Activated CD8-positive, alpha-beta T cell treated with anti-CD3 and anti-CD28 coated beads for 36 hours (primary cell): ENCODE measurements at regions of chr4 and their contacts with region 1.

Region 1: GRCh38 chr4:173334085-173334772 is at the start of gene HMGB2:
- DNase-seq: peak; percentile 100
- ATAC-seq: peak; percentile 94
- H3K4me3 Mint-ChIP-seq: peak within 1 kb of the TSS; percentile 92
- H3K27ac Mint-ChIP-seq: peak within 1 kb of the TSS; percentile 99
- H3K4me1 Mint-ChIP-seq: peaks cover 13% of the 10 kb centered on the region
- H3K27me3 Mint-ChIP-seq: peaks cover 6% of the 10 kb centered on the region
- CTCF ChIP-seq: no peak
- total RNA-seq, gene HMGB2: 527 to 534 TPM

Region 2: DNA sequence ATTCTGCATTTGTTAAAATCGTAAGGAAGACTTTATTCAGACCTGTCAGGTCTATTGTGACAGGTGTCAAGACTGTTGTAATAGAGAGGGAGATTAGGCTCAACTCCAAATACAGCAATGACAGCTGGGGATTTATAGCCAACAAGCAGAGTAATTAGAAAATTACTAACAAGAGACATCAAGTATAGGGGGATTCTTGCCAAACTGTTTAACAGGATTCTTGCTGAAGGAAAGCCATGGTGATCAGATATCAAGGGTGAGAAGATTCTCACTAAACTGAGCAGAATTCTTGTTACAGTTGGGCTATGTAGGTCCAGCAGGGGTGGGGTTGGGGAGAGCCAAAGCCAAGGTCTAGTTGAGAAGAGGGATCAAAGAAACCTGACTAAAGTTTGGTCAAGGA is 626.6 kb before region 1 on chr4:
- CTCF ChIA-PET with region 1: no interaction called
- POLR2A ChIA-PET with region 1: no interaction called
- intact Hi-C with region 1: no loop called
- DNase-seq: no peak
- ATAC-seq: no peak
- H3K4me3 Mint-ChIP-seq: no peak overlapping the region
- H3K27ac Mint-ChIP-seq: no peak overlapping the region
- H3K4me1 Mint-ChIP-seq: no peaks in the 10 kb centered on the region
- H3K27me3 Mint-ChIP-seq: no peaks in the 10 kb centered on the region
- CTCF ChIP-seq: no peak

Region 3: GRCh38 chr4:172830295-172830764 is 503.9 kb before region 1 on chr4:
- CTCF ChIA-PET with region 1: no interaction called
- POLR2A ChIA-PET with region 1: no interaction called
- intact Hi-C with region 1: no loop called
- DNase-seq: no peak
- ATAC-seq: no peak
- H3K4me3 Mint-ChIP-seq: no peak overlapping the region
- H3K27ac Mint-ChIP-seq: no peak overlapping the region
- H3K4me1 Mint-ChIP-seq: no peaks in the 10 kb centered on the region
- H3K27me3 Mint-ChIP-seq: peaks cover 2% of the 10 kb centered on the region
- CTCF ChIP-seq: peak; percentile 77

Region 4: DNA sequence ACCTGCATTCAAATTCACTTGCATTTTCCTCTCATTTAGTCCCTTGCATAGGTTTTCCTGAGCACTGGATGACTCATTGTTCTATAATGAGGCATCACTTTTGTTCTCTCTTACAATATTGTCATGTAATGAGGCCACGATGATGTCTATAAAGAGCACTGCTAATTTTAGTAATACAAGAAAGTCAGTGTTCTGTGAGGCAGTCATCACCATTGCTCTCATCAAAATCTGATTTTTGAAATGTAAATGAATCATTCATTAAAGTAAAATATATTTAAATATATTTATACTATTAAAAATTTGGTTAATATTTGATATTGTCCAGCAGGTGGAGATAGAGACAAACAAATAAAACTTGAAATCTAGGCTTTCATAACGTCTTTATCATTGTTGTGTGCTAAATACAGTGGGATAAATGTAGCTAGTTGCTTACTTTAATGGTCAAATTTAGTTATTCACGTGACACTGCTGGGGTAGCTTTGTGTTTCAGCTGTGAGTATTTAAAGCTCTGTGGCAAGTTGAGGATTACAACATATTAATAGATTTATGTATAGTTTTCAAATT is 15.5 kb before region 1 on chr4:
- CTCF ChIA-PET with region 1: interaction called, 11 read pairs
- POLR2A ChIA-PET with region 1: interaction called, 5 read pairs
- intact Hi-C with region 1: no loop called
- DNase-seq: no peak
- ATAC-seq: peak; percentile 64
- H3K4me3 Mint-ChIP-seq: no peak overlapping the region
- H3K27ac Mint-ChIP-seq: no peak overlapping the region
- H3K4me1 Mint-ChIP-seq: peaks cover 9% of the 10 kb centered on the region
- H3K27me3 Mint-ChIP-seq: no peaks in the 10 kb centered on the region
- CTCF ChIP-seq: peak; percentile 65

Region 5: DNA sequence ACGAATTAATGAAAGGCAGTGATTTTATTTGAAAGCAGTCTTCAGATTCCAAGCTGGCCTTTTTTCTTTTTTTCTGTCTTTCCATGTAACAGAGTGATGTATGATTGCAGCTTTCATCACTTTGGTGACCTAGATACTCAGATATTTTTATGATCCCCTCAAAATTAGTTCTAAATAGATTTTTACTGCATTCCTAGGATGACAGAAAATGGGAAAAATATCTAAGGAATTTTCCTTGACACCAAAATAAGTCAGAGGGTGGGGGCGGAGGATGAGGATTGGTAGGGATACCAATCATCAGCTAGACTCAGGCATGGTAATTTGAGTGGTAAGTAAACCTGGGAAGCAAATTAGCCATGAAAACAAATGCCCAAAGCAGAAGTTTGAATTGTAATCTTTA is 11.8 kb after region 1 on chr4:
- CTCF ChIA-PET with region 1: interaction called, 10 read pairs
- POLR2A ChIA-PET with region 1: interaction called, 24 read pairs
- intact Hi-C with region 1: no loop called
- DNase-seq: no peak
- ATAC-seq: no peak
- H3K4me3 Mint-ChIP-seq: no peak overlapping the region
- H3K27ac Mint-ChIP-seq: no peak overlapping the region
- H3K4me1 Mint-ChIP-seq: no peaks in the 10 kb centered on the region
- H3K27me3 Mint-ChIP-seq: peaks cover 1% of the 10 kb centered on the region
- CTCF ChIP-seq: no peak

Region 6: GRCh38 chr4:173365359-173365996 is 31.2 kb after region 1 on chr4:
- CTCF ChIA-PET with region 1: interaction called, 10 read pairs
- POLR2A ChIA-PET with region 1: interaction called, 79 read pairs
- intact Hi-C with region 1: loop called (anchors 1 kb)
- DNase-seq: no peak
- ATAC-seq: no peak
- H3K4me3 Mint-ChIP-seq: no peak overlapping the region
- H3K27ac Mint-ChIP-seq: no peak overlapping the region
- H3K4me1 Mint-ChIP-seq: peaks cover 27% of the 10 kb centered on the region
- H3K27me3 Mint-ChIP-seq: no peaks in the 10 kb centered on the region
- CTCF ChIP-seq: no peak

Region 7: DNA sequence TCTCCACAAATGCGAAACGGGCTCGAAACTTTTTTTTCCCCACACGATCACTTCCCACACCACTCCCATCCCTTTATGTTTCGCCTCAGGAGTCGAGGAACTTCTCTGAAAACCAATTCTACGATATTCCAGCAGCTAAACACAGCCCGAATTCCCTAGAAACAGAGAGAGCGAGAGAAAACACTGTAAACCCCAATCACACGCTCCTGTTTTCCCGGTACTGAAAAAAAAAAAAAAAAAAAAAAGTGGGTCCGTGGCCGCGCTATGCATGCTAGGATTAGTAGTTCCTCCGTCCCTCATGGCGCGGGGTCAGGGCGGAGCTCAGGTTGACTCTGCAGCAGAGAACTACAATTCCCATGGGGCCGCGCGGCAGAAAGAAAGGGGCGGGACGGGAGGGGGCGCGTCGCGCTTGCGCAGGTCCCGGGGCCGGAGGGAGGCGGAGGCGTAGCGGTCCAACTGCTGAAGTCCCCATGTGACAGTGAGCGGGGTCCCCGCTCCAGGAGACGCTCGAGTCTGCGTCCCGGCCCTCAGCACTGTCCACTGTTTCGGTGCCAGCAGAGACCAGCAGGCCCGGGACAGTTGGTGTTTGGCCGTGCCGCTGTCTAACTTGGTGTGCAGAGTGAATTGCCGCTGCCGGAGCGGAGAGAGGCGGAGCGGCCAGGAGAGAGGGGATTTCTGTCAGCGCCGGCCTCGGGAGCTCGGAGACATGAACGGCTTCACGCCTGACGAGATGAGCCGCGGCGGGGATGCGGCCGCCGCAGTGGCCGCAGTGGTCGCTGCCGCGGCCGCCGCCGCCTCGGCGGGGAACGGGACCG is 36.5 kb after region 1 on chr4 and contains the start of gene SAP30:
- CTCF ChIA-PET with region 1: interaction called, 10 read pairs
- POLR2A ChIA-PET with region 1: interaction called, 79 read pairs
- intact Hi-C with region 1: loop called (anchors 1 kb)
- DNase-seq: peak; percentile 98
- ATAC-seq: peak; percentile 88
- H3K4me3 Mint-ChIP-seq: peak within 1 kb of the TSS; percentile 97
- H3K27ac Mint-ChIP-seq: peak within 1 kb of the TSS; percentile 98
- H3K4me1 Mint-ChIP-seq: peaks cover 32% of the 10 kb centered on the region
- H3K27me3 Mint-ChIP-seq: peaks cover 14% of the 10 kb centered on the region
- CTCF ChIP-seq: no peak
- total RNA-seq, gene SAP30: 40.7 to 41.1 TPM